ENCODE measurements at regions of chr3 and their contacts with region 1.

Region 1: GRCh38 chr3:142279965-142280590 is 54.7 kb upstream of the GK5 start:
- DNase-seq: peak; percentile 41 to 70 (median 55)
- ATAC-seq: peak; percentile 89
- H3K4me3 ChIP-seq: no peak overlapping the region
- H3K27ac ChIP-seq: no peak overlapping the region
- H3K4me1 ChIP-seq: no peaks in the 10 kb centered on the region
- H3K27me3 ChIP-seq: no peaks in the 10 kb centered on the region
- CTCF ChIP-seq: peak in 6 of 7 experiments; percentile 41 to 87 (median 80)
- POLR2A ChIP-seq: no peak

Region 2: GRCh38 chr3:141959921-141960554 is 320.0 kb before region 1 on chr3:
- intact Hi-C with region 1: loop called (anchors 10 kb)
- DNase-seq: no peak
- ATAC-seq: no peak
- H3K4me3 ChIP-seq: no peak overlapping the region
- H3K27ac ChIP-seq: no peak overlapping the region
- H3K4me1 ChIP-seq: no peaks in the 10 kb centered on the region
- H3K27me3 ChIP-seq: no peaks in the 10 kb centered on the region
- CTCF ChIP-seq: no peak
- POLR2A ChIP-seq: no peak

Region 3: GRCh38 chr3:142120707-142121106 is 159.4 kb before region 1 on chr3:
- intact Hi-C with region 1: loop called (anchors 5 kb)
- DNase-seq: no peak
- ATAC-seq: no peak
- H3K4me3 ChIP-seq: no peak overlapping the region
- H3K27ac ChIP-seq: no peak overlapping the region
- H3K4me1 ChIP-seq: no peaks in the 10 kb centered on the region
- H3K27me3 ChIP-seq: no peaks in the 10 kb centered on the region
- CTCF ChIP-seq: no peak
- POLR2A ChIP-seq: no peak

Region 4: DNA sequence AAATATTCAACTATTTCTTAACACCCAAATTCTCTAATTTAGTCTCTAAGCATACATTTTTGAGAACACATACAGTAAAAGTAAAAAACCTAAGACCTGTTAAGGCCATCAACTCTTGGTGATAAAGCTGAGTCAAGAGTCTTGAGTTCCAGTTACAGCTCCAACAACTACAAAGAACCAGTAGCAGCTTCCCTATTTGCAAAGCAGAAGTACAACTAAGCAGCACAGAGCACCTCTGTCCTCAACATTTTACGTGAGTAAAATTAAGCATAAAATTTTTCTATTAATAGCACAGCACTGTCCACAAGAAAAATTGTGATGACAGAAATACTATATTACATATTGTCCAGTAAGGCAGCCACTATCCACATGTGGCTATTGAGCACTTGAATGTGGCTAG is 604.5 kb after region 1 on chr3:
- intact Hi-C with region 1: no loop called
- DNase-seq: no peak
- ATAC-seq: no peak
- H3K4me3 ChIP-seq: no peak overlapping the region
- H3K27ac ChIP-seq: no peak overlapping the region
- H3K4me1 ChIP-seq: peaks cover 16% of the 10 kb centered on the region
- H3K27me3 ChIP-seq: peaks cover 0 to 14% of the 10 kb centered on the region in 2 donors
- CTCF ChIP-seq: no peak
- POLR2A ChIP-seq: no peak